ENCODE measurements at regions of chr16 and their contacts with region 1.

Region 1: GRCh38 chr16:88706288-88706964 is at the starts of genes CTU2 and RNF166:
- DNase-seq: peak; percentile 95 to 98
- ATAC-seq: peak; percentile 94
- H3K4me3 ChIP-seq: peak within 1 kb of the TSS; percentile 65 to 87
- H3K27ac ChIP-seq: peak within 1 kb of the TSS in 1 of 2 donors; percentile 66
- H3K4me1 ChIP-seq: peaks cover 0 to 4% of the 10 kb centered on the region in 2 donors
- H3K27me3 ChIP-seq: no peaks in the 10 kb centered on the region
- total RNA-seq, gene CTU2: 15.8 to 17.0 TPM
- total RNA-seq, gene RNF166: 18.0 to 39.4 TPM

Region 2: DNA sequence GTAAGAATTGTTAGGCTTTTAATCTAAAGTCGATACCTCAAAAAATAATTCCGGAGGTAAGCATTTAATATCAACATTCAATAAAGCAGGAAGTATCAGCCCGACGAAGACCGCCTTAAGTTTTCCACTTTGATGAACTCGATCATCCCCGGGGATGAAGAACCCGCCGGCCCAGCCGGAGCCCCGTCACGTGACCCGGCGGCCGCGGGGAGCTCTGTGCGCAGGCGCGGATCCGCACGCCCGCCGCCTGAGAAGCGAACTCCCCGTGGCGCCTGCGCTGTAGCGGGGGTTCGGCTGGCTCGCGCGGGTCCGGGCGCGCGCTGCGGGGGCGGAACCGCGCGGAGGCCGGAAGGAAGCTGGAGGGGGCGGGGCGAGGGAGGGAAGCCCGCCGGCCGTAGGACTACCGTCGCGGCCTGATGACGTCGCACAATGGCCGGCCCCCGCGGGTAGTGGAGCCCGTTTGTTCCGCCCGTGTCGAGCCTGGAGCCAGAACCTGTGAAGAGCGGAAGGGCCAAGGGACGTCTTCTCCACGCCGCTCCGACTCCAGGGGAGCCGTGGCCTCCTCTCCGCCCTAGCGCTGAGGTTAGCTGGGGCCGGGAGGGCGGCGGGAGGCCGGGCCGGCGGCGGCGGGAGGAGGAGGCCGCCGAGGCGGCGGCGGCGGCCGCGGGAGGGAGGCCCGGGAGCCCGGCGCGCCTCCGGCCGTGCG is 136.3 kb before region 1 on chr16 and contains the start of gene ZC3H18:
- intact Hi-C with region 1: loop called (anchors 2 to 5 kb)
- DNase-seq: peak; percentile 98 to 99
- ATAC-seq: peak; percentile 99
- H3K4me3 ChIP-seq: peak within 1 kb of the TSS; percentile 80
- H3K27ac ChIP-seq: peak within 1 kb of the TSS in 1 of 2 donors; percentile 58
- H3K4me1 ChIP-seq: peaks cover 0 to 3% of the 10 kb centered on the region in 2 donors
- H3K27me3 ChIP-seq: no peaks in the 10 kb centered on the region
- total RNA-seq, gene ZC3H18: 37.7 to 38.5 TPM

Region 3: GRCh38 chr16:88662843-88663606 is 43.4 kb before region 1 on chr16 and contains the start of gene MVD:
- intact Hi-C with region 1: loop called in 1 of 2 experiments (anchors 5 kb)
- DNase-seq: peak; percentile 98
- ATAC-seq: peak; percentile 98
- H3K4me3 ChIP-seq: peak within 1 kb of the TSS; percentile 52 to 80
- H3K27ac ChIP-seq: no peak within 1 kb of the TSS
- H3K4me1 ChIP-seq: no peaks in the 10 kb centered on the region
- H3K27me3 ChIP-seq: no peaks in the 10 kb centered on the region
- total RNA-seq, gene MVD: 26.0 to 26.6 TPM

Measured in aorta (tissue), 5 donors.